ENCODE measurements at regions of chr11 and their contacts with region 1.

Region 1: GRCh38 chr11:108302121-108302785 is 79.4 kb downstream of the ATM start:
- DNase-seq: no peak
- ATAC-seq: no peak
- H3K4me3 ChIP-seq: no peak overlapping the region
- H3K4me3 Mint-ChIP-seq: no peak overlapping the region
- H3K27ac ChIP-seq: no peak overlapping the region
- H3K27ac Mint-ChIP-seq: peak overlapping the region; percentile 50
- H3K4me1 ChIP-seq: no peaks in the 10 kb centered on the region
- H3K4me1 Mint-ChIP-seq: peaks cover 32% of the 10 kb centered on the region
- H3K27me3 ChIP-seq: no peaks in the 10 kb centered on the region
- H3K27me3 Mint-ChIP-seq: no peaks in the 10 kb centered on the region
- CTCF ChIP-seq: no peak

Region 2: GRCh38 chr11:108222686-108223448 is 79.4 kb before region 1 on chr11 and contains the start of gene ATM:
- CTCF ChIA-PET with region 1: no interaction called
- POLR2A ChIA-PET with region 1: no interaction called
- intact Hi-C with region 1: no loop called
- DNase-seq: peak; percentile 98 to 100 (median 99)
- ATAC-seq: peak; percentile 77
- H3K4me3 ChIP-seq: peak within 1 kb of the TSS; percentile 90 to 92
- H3K4me3 Mint-ChIP-seq: no peak within 1 kb of the TSS
- H3K27ac ChIP-seq: peak within 1 kb of the TSS; percentile 96 to 97
- H3K27ac Mint-ChIP-seq: no peak within 1 kb of the TSS
- H3K4me1 ChIP-seq: peaks cover 36% of the 10 kb centered on the region
- H3K4me1 Mint-ChIP-seq: peaks cover 52% of the 10 kb centered on the region
- H3K27me3 ChIP-seq: no peaks in the 10 kb centered on the region
- H3K27me3 Mint-ChIP-seq: no peaks in the 10 kb centered on the region
- CTCF ChIP-seq: peak; percentile 70
- total RNA-seq, gene ATM: 272 to 273 TPM

Region 3: GRCh38 chr11:108289699-108290098 is 12.6 kb before region 1 on chr11:
- CTCF ChIA-PET with region 1: no interaction called
- POLR2A ChIA-PET with region 1: no interaction called
- intact Hi-C with region 1: loop called in 1 of 2 experiments (anchors 2 kb)
- DNase-seq: no peak
- ATAC-seq: no peak
- H3K4me3 ChIP-seq: no peak overlapping the region
- H3K4me3 Mint-ChIP-seq: no peak overlapping the region
- H3K27ac ChIP-seq: peak overlapping the region in 1 of 2 experiments; percentile 20
- H3K27ac Mint-ChIP-seq: peak overlapping the region; percentile 81
- H3K4me1 ChIP-seq: peaks cover 28% of the 10 kb centered on the region
- H3K4me1 Mint-ChIP-seq: peaks cover 28% of the 10 kb centered on the region
- H3K27me3 ChIP-seq: no peaks in the 10 kb centered on the region
- H3K27me3 Mint-ChIP-seq: no peaks in the 10 kb centered on the region
- CTCF ChIP-seq: no peak

Region 4: GRCh38 chr11:108313444-108313843 is 11.2 kb after region 1 on chr11:
- CTCF ChIA-PET with region 1: no interaction called
- POLR2A ChIA-PET with region 1: no interaction called
- intact Hi-C with region 1: loop called in 1 of 2 experiments (anchors 2 kb)
- DNase-seq: no peak
- ATAC-seq: no peak
- H3K4me3 ChIP-seq: no peak overlapping the region
- H3K4me3 Mint-ChIP-seq: no peak overlapping the region
- H3K27ac ChIP-seq: no peak overlapping the region
- H3K27ac Mint-ChIP-seq: peak overlapping the region; percentile 80
- H3K4me1 ChIP-seq: no peaks in the 10 kb centered on the region
- H3K4me1 Mint-ChIP-seq: peaks cover 30% of the 10 kb centered on the region
- H3K27me3 ChIP-seq: no peaks in the 10 kb centered on the region
- H3K27me3 Mint-ChIP-seq: no peaks in the 10 kb centered on the region
- CTCF ChIP-seq: no peak

Region 5: GRCh38 chr11:108768370-108768769 is 466.1 kb after region 1 on chr11:
- CTCF ChIA-PET with region 1: no interaction called
- POLR2A ChIA-PET with region 1: no interaction called
- intact Hi-C with region 1: no loop called
- DNase-seq: no peak
- ATAC-seq: no peak
- H3K4me3 ChIP-seq: no peak overlapping the region
- H3K4me3 Mint-ChIP-seq: no peak overlapping the region
- H3K27ac ChIP-seq: no peak overlapping the region
- H3K27ac Mint-ChIP-seq: no peak overlapping the region
- H3K4me1 ChIP-seq: no peaks in the 10 kb centered on the region
- H3K4me1 Mint-ChIP-seq: peaks cover 20% of the 10 kb centered on the region
- H3K27me3 ChIP-seq: no peaks in the 10 kb centered on the region
- H3K27me3 Mint-ChIP-seq: no peaks in the 10 kb centered on the region
- CTCF ChIP-seq: no peak

Measured in CD8-positive, alpha-beta T cell (primary cell).